Dendritic cell treated with granulocyte-macrophage colony-stimulating factor and Interleukin-4, amounts not matched to agents 40 ng/mL and 50 ng/mL, for 4 days (primary cell): ENCODE measurements at regions of chr14 and their contacts with region 1.

Region 1: GRCh38 chr14:64891839-64892375 is 12.2 kb upstream of the SPTB start:
- H3K4me3 Mint-ChIP-seq: no peak overlapping the region
- H3K27ac Mint-ChIP-seq: no peak overlapping the region
- H3K4me1 Mint-ChIP-seq: no peaks in the 10 kb centered on the region
- H3K27me3 Mint-ChIP-seq: peaks cover 14% of the 10 kb centered on the region

Region 2: DNA sequence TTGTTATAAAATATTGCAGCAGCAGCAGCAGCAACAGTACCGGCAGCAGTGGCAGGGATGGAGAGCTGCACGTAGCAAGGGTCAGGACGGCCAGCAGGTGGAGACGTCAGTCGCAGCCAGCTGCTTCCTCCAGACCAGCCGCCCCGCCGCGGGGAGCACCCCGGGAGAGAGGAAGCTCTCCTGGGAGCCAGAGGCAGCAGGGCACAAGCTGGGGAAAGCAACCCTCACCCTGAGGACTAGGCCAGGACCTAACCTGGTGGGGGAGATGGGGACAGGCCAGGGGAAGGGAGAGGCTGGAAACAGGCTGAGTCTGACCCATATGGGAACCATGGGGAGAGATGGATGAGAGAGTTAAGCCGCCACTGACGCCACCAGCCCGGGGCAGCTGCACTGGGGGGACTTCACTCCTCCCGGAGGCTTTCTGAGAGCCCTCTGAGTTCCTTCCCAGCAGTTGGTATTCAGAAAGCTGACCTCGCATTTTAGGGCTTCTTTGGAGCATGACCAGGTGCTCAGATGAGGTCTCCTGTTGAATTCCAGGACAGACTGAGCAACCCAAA is 68.5 kb before region 1 on chr14:
- intact Hi-C with region 1: loop called (anchors 5 kb)
- H3K4me3 Mint-ChIP-seq: no peak overlapping the region
- H3K27ac Mint-ChIP-seq: no peak overlapping the region
- H3K4me1 Mint-ChIP-seq: peaks cover 21% of the 10 kb centered on the region
- H3K27me3 Mint-ChIP-seq: peaks cover 22% of the 10 kb centered on the region